ENCODE measurements at regions of chr17 and their contacts with region 1.

Region 1: GRCh38 chr17:38982858-38983746 is 15.9 kb upstream of the FBXO47 start:
- H3K4me3 Mint-ChIP-seq: no peak overlapping the region
- H3K27ac Mint-ChIP-seq: no peak overlapping the region
- H3K4me1 Mint-ChIP-seq: no peaks in the 10 kb centered on the region
- H3K27me3 Mint-ChIP-seq: peaks cover 5% of the 10 kb centered on the region

Region 2: DNA sequence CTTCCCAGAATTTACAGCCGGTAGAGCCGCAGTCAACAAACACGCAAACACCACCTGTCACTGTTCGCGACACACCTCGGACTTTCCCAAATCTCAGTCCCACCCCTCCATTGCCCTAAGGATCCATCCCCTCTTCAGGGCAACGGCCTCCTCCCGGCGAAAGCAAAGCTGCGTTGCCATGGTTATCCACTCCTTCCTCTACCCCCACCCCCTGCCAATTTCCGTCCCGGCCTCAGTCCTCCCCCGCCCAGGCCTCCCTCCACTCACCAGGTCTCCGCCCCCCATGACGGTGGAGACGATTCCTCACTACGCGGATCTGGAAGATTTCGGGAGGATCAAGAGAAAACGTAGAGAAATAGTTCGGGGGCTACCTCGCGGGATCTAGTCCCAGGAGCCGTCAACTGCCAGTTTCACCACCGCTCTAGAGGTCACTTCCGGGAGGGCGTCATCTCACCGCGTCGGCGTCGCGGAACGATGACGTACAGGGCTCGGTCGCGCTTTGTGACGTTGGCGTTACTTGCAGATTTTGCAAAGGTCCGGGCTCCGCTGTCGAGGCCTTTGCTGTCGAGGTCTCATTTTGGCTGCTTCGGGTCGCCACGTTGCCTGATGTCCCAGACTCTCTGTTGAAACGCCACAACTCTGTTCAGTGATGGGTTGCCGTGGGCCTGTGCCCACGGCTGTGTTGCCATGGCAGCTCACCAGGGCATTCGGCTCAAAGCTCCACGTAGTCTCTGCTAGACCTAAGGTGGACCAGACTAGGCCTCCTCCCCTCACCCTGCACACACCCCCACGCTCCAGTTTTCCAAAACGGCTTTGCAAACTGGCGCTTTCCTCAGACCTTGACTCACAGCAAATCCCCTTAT is 158.0 kb before region 1 on chr17 and contains the start of gene CWC25:
- intact Hi-C with region 1: no loop called
- H3K4me3 Mint-ChIP-seq: peak within 1 kb of the TSS; percentile 98
- H3K27ac Mint-ChIP-seq: peak within 1 kb of the TSS; percentile 100
- H3K4me1 Mint-ChIP-seq: peaks cover 29% of the 10 kb centered on the region
- H3K27me3 Mint-ChIP-seq: peaks cover 3% of the 10 kb centered on the region

Region 3: DNA sequence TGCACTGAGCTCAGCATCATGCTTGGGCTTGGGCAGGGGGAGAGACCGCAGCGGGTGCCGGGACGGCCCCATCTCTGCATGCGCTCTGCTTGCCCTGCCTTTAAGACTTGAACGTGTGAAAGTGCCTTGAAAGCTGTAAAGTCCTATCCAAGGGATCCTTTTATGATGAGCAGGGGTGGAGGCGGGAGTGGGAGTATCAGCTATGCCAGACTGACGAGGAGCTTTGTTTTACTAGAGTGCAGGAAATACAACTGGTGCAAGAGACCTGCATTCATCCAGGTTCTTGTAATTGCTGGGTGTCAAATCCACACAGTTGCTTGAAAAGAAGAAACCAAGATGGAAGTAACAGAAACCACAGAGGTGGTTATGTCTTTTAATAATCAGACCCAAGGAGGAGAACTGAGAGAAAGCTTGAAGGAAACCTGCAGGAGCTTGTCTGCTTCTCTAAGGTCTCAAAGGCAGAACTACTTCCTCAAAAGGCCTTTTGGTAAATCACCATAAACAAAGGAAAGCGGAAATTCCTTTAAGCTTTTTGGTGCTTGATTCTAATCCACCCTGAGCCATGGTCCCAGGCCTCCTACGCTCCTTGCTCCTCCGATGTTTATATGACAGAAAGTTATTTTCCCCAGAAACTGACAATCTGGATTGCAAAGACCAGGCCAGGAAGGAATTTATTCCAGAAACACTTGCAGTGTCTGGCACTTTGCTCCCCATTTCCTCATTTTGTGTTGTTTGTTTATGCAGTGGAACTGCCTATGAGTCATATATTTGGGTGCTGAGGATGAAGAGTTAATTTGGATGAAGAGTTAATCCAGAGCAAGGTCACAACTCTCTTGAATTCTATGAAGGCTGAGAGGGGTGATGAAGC is 35.4 kb after region 1 on chr17:
- intact Hi-C with region 1: loop called (anchors 5 kb)
- H3K4me3 Mint-ChIP-seq: no peak overlapping the region
- H3K27ac Mint-ChIP-seq: peak overlapping the region; percentile 76
- H3K4me1 Mint-ChIP-seq: peaks cover 50% of the 10 kb centered on the region
- H3K27me3 Mint-ChIP-seq: peaks cover 1% of the 10 kb centered on the region

Region 4: DNA sequence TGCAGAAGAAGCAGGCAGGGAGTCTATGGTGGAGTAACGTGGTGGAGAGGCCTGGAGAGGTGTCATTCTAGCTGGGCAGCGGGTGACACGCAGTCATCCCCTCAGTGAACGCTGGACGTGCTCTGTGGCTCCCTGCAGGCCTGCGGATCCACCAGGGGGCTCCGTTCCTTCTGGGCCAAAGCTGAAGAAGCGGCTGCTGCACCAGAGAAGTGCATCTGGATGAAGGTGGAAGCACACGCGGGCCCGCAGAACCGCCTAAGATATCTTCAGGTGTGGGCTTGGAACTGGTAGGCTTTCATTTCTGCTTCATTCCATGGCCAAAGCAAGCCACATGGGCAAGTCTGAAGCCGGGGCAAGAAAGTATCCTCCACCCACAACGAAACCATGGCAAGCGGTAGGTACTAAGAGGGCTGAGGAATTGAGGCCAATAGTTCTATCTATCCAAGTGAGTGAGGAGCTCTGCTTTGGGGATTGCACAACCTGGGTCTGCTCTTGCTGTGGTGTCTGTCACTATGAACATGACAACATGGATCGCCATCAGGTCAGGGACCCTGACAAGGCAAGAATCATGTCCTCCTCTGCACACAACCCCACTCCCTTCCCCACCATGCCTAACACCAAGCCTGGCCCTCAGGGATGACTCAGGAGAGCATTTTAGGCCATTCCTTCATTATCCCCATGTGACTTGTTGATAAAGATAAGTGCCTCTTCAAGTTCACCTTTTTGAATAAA is 63.0 kb after region 1 on chr17:
- intact Hi-C with region 1: no loop called
- H3K4me3 Mint-ChIP-seq: no peak overlapping the region
- H3K27ac Mint-ChIP-seq: no peak overlapping the region
- H3K4me1 Mint-ChIP-seq: no peaks in the 10 kb centered on the region
- H3K27me3 Mint-ChIP-seq: peaks cover 15% of the 10 kb centered on the region

Region 5: GRCh38 chr17:39069114-39069756 is 86.1 kb after region 1 on chr17:
- intact Hi-C with region 1: loop called (anchors 10 kb)
- H3K4me3 Mint-ChIP-seq: no peak overlapping the region
- H3K27ac Mint-ChIP-seq: no peak overlapping the region
- H3K4me1 Mint-ChIP-seq: peaks cover 18% of the 10 kb centered on the region
- H3K27me3 Mint-ChIP-seq: peaks cover 3% of the 10 kb centered on the region

Region 6: DNA sequence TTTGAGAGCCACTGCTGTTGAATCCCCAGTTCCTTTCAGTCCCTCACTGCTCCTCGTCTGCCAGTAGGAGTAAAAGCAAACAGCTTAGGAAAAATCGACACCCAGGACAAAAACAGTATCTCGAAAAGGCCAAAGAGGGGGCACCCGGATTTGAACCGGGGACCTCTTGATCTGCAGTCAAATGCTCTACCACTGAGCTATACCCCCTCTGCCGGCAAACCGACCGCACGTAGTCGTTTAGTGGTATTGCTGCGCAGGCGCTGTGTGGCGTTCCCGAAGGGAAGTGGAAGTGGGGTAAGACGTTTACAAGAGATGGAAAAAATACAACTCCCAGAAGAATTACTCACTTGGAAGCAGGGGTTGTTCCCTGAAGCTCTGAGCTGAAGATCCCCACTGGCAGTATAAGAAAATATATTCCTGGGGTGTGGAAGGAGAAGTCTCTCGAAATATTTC is 170.5 kb after region 1 on chr17:
- intact Hi-C with region 1: loop called (anchors 2 kb)
- H3K4me3 Mint-ChIP-seq: peak overlapping the region; percentile 99
- H3K27ac Mint-ChIP-seq: peak overlapping the region; percentile 86
- H3K4me1 Mint-ChIP-seq: peaks cover 33% of the 10 kb centered on the region
- H3K27me3 Mint-ChIP-seq: peaks cover 37% of the 10 kb centered on the region

Region 7: GRCh38 chr17:39174907-39175694 is 192.0 kb after region 1 on chr17:
- intact Hi-C with region 1: loop called (anchors 1 kb)
- H3K4me3 Mint-ChIP-seq: peak overlapping the region; percentile 77
- H3K27ac Mint-ChIP-seq: peak overlapping the region; percentile 75
- H3K4me1 Mint-ChIP-seq: peaks cover 28% of the 10 kb centered on the region
- H3K27me3 Mint-ChIP-seq: peaks cover 5% of the 10 kb centered on the region

Region 8: GRCh38 chr17:39244600-39245570 is 261.8 kb after region 1 on chr17:
- intact Hi-C with region 1: loop called (anchors 2 kb)
- H3K4me3 Mint-ChIP-seq: no peak overlapping the region
- H3K27ac Mint-ChIP-seq: no peak overlapping the region
- H3K4me1 Mint-ChIP-seq: peaks cover 13% of the 10 kb centered on the region
- H3K27me3 Mint-ChIP-seq: peaks cover 20% of the 10 kb centered on the region

Measured in dendritic cell treated with granulocyte-macrophage colony-stimulating factor and Interleukin-4, amounts not matched to agents 40 ng/mL and 50 ng/mL, for 4 days (primary cell).